ENCODE measurements at regions of chr6 and their contacts with region 1.

Region 1: DNA sequence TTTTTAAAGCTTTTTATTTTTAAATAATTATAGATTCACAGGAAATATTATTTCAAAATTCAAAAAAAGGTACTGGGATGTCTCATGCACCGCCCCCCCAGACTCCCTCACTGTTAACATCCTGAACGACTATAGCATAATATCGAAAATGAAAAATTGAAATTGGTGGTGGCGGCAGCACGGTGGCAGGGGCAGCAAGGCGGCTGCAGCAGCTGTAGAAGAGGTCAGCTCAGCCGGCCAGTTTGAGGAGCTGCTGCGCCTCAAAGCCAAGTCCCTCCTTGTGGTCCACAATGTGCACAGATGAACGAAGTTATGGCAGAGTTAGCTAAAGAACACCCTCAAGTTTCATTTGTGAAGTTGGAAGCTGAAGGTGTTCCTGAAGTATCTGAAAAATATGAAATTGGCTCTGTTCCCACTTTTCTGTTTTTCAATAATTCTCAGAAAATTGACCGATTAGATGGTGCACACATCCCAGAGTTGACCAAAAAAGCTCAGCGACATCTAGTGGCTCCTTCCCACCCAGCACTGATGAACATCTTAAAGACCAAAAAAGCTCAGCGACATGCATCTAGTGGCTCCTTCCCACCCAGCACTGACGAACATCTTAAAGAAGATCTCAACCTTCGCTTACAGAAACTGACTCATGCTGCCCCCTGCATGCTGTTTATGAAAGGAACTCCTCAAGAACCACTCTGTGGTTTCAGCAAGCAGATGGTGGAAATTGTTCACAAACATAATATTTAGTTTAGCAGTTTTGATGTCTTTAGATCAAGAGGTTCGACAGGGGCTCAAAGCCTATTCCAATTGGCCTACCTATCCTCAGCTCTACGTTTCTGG is 100.8 kb downstream of the FAM217A start:
- DNase-seq: peak; percentile 84
- H3K4me3 ChIP-seq: no peak overlapping the region
- CTCF ChIP-seq: peak; percentile 46

Region 2: DNA sequence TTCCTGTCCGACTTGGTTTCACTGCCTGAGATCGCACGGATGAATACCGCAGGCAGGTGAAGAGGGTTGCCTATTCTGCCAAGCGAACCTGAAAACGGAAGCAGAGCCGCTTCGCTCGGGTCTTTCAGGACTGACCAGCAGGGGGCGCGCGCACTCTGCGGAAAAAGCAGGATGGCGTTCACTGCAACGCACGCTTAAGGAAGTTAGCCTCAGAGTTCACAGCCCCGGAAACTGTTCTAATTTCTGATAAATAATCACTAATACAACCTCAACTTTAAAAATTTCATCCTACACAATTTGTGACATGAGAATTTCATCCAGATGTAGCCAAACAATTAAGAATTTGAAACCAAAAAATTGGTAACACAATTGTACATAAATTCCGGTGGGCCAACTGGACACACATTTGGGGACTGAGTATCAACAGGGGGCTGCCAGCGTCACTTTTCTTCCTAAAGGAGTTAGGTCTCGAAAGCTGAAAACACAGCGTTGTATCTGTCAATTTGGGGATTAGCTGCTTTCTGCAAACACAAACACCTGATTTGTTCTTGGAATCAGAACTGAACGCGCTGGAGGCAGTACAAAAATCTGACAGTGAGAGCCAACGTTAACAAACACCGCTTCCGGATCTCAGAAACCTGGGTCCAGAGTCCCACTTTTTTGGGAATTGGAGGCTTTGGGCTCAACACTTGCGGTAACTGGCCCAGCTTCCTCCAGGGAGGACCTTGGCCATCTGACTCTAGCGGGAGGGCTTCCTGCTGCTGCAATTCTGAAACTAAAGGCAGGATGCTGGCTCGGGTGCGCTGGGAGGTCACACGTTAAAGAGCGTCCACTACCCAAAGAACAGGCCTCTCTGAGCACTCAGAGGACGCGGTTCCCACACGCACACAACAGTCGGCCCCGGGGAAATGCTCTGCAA is 235.4 kb before region 1 on chr6:
- CTCF ChIA-PET with region 1: interaction called, 39 read pairs
- POLR2A ChIA-PET with region 1: no interaction called
- DNase-seq: no peak
- H3K4me3 ChIP-seq: 0 out of 2 replicates have a peak overlapping the region, but pooled peaks have one; percentile 25
- CTCF ChIP-seq: peak; percentile 87

Region 3: GRCh38 chr6:3887150-3887700 is 90.9 kb before region 1 on chr6:
- CTCF ChIA-PET with region 1: interaction called, 22 read pairs
- POLR2A ChIA-PET with region 1: interaction called, 3 read pairs
- DNase-seq: no peak
- H3K4me3 ChIP-seq: no peak overlapping the region
- CTCF ChIP-seq: peak; percentile 55

Region 4: DNA sequence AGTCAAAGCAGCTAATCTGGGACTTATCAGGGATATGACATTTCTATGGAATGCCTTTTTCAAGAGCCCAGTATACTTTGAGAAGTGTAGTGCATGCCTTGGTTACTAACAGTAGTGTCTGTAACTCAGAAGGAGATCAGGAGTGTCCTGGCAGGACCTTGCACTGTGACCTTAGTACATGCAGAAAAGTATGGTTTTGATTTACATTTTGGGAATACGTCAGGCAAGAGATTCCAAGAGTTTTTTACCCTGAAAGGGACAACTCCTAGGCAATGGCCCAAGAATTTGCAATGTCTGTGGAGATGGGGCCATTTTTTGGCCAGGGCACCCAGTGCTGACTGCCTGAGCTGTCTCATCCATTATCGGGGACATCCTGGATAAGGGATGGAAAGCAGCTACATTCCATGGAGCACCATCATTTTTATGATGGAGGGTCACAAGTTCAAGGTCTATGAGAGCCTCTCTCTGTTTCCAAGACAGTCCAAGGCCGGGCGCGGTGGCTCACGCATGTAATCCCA is 48.8 kb before region 1 on chr6:
- CTCF ChIA-PET with region 1: interaction called, 13 read pairs
- POLR2A ChIA-PET with region 1: interaction called, 3 read pairs
- DNase-seq: peak; percentile 96
- H3K4me3 ChIP-seq: no peak overlapping the region
- CTCF ChIP-seq: no peak

Region 5: GRCh38 chr6:3960754-3961361 is 17.2 kb before region 1 on chr6:
- CTCF ChIA-PET with region 1: interaction called, 39 read pairs
- POLR2A ChIA-PET with region 1: no interaction called
- DNase-seq: no peak
- H3K4me3 ChIP-seq: no peak overlapping the region
- CTCF ChIP-seq: no peak

Region 6: DNA sequence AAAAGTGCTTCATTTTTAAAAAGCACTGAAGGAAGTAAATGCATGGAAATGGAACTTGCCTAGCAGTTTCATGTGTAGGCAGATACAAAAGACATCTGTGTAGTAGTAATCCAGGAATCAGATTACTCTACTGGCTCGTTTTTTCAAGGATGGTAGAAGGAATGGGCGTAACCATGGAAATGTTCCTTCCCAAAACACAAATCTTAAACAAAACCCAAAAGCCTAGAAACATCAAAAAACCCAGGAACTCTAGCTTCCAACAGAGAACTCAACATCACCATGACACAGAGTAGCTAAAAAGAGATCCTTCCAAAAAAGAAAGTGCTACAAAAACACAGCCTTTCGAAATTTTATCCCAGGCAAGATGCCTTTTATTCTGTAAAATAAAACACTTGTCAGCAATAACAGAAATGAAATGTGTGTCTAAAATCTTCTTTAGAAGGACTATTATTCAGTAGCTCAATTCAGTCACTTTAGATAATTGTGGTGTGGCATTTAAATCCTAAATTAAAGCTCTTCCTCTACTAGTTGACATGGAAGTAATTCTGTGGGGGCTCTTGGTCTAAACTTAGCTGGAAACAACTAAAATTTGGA is 19.2 kb after region 1 on chr6:
- CTCF ChIA-PET with region 1: interaction called, 32 read pairs
- POLR2A ChIA-PET with region 1: no interaction called
- DNase-seq: no peak
- H3K4me3 ChIP-seq: no peak overlapping the region
- CTCF ChIP-seq: no peak

Region 7: GRCh38 chr6:4085332-4085700 is 107.2 kb after region 1 on chr6:
- CTCF ChIA-PET with region 1: no interaction called
- POLR2A ChIA-PET with region 1: no interaction called
- DNase-seq: peak; percentile 10
- H3K4me3 ChIP-seq: no peak overlapping the region
- CTCF ChIP-seq: no peak